Mammary epithelial cell (primary cell): ENCODE measurements at regions of chr6 and their contacts with region 1.

Region 1: DNA sequence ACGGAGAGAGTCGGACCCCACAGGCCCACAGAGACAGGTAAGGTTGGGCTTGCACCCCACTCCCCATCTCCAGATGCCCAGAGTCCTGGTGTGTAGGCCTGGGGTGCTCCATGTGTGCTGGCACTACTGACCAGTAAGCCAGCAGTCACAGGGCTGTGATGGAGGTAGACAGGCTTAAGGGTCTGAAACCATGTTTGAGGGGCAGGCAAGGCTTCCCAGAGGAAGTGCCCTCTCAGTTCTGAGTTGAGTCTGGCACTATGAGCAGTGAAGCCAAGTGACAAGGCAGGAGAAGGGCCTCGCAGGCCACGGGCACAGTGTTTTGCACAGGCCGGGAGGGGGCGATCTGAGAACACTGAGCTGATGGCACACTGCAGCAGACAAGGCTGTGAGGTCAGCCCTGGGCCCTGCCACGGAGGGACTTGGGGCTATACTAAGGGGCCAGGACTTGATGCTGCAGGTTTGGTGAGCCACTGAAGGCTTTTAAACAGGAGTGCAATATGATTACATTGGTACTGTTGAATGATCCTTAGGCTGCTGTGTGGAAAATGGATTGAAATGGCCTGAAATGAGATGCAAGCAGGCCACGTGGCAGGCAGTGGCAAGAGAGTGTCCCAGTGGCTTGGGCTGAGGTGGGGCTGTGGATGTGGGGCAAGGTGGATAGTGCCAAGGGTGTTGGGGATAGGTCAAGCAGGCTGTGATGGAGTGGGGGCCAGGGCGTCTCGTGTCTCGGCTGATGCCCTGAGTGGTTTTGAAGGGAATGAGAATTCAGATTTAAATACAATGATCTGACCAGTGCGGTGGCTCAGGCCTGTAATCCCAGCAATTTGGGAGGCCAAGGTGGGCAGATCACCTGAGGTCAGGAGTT is 20.3 kb downstream of the TTBK1 start:
- DNase-seq: peak; percentile 51
- H3K4me3 ChIP-seq: no peak overlapping the region
- H3K27ac ChIP-seq: no peak overlapping the region
- H3K4me1 ChIP-seq: no peaks in the 10 kb centered on the region
- H3K27me3 ChIP-seq: no peaks in the 10 kb centered on the region
- CTCF ChIP-seq: peak; percentile 87 to 91

Region 2: GRCh38 chr6:43159599-43159998 is 103.9 kb before region 1 on chr6:
- CTCF ChIA-PET with region 1: no interaction called
- dilution Hi-C with region 1: no loop called
- in situ Hi-C with region 1: no loop called
- intact Hi-C with region 1: no loop called
- DNase-seq: no peak
- H3K4me3 ChIP-seq: no peak overlapping the region
- H3K27ac ChIP-seq: no peak overlapping the region
- H3K4me1 ChIP-seq: no peaks in the 10 kb centered on the region
- H3K27me3 ChIP-seq: no peaks in the 10 kb centered on the region
- CTCF ChIP-seq: no peak

Region 3: GRCh38 chr6:43170417-43171283 is 92.9 kb before region 1 on chr6 and contains the start of gene SRF:
- CTCF ChIA-PET with region 1: no interaction called
- dilution Hi-C with region 1: no loop called
- in situ Hi-C with region 1: no loop called
- intact Hi-C with region 1: no loop called
- DNase-seq: peak; percentile 99
- H3K4me3 ChIP-seq: peak within 1 kb of the TSS; percentile 56 to 73 (median 69)
- H3K27ac ChIP-seq: peak within 1 kb of the TSS; percentile 72
- H3K4me1 ChIP-seq: peaks cover 24% of the 10 kb centered on the region
- H3K27me3 ChIP-seq: no peaks in the 10 kb centered on the region
- CTCF ChIP-seq: peak in 1 of 2 donors; percentile 21
- total RNA-seq, gene SRF: 35.7 to 41.2 TPM

Region 4: DNA sequence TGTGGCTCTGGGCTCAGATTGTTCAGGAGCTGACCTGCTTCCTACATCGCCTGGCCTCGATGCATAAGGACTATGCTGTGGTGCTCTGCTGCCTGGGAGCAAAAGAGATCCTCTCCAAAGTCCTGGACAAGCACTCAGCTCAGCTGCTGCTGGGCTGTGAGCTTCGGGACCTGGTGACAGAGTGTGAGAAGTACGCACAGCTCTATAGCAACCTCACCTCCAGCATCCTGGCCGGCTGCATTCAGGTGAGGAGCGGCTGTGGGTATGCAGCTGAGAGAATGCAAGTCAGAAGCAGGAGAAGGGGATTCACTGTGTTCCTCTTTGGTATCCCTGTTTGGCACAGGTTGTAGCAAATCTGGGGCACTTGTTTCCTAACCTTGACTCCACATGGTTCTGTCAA is 63.6 kb before region 1 on chr6:
- CTCF ChIA-PET with region 1: no interaction called
- dilution Hi-C with region 1: loop called (anchors 5 kb)
- in situ Hi-C with region 1: no loop called
- intact Hi-C with region 1: no loop called
- DNase-seq: no peak
- H3K4me3 ChIP-seq: no peak overlapping the region
- H3K27ac ChIP-seq: no peak overlapping the region
- H3K4me1 ChIP-seq: no peaks in the 10 kb centered on the region
- H3K27me3 ChIP-seq: no peaks in the 10 kb centered on the region
- CTCF ChIP-seq: no peak

Region 5: DNA sequence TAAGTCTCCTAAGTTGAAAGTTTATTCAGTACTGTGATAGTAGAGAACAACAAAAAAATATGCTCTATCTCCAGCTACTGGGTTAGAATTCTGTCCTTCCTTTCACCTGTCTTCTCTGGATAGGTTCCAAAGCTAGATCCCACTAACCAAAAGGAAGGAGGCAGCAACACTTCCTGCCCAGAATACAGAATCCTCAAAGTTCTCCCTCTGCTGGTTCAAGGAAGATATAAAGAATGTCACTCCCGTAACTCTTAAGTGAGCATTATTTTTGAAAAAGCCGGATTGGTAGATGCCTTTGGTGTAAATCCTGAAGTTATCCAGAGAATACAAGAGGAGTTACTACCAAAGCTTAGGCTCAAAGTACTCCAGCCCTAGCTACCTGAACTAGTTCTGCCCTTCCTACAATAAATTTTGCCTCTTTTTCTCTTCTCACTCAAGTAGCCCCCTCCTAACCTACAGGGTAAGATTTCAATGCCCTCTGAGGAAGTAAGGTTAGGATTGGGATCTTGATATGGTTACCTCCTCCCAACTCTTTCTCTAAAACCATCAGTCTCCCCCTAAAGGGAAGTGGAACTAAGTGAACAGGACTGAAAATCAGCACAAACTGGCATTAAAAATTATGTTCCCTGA is 71.0 kb after region 1 on chr6:
- CTCF ChIA-PET with region 1: interaction called, 4 read pairs
- dilution Hi-C with region 1: loop called (anchors 5 kb)
- in situ Hi-C with region 1: loop called (anchors 5 to 10 kb)
- intact Hi-C with region 1: loop called (anchors 1 kb)
- DNase-seq: peak; percentile 47
- H3K4me3 ChIP-seq: no peak overlapping the region
- H3K27ac ChIP-seq: no peak overlapping the region
- H3K4me1 ChIP-seq: no peaks in the 10 kb centered on the region
- H3K27me3 ChIP-seq: no peaks in the 10 kb centered on the region
- CTCF ChIP-seq: peak; percentile 58 to 67

Region 6: GRCh38 chr6:43369174-43370022 is 105.9 kb after region 1 on chr6 and contains the start of gene ZNF318:
- CTCF ChIA-PET with region 1: no interaction called
- dilution Hi-C with region 1: no loop called
- in situ Hi-C with region 1: no loop called
- intact Hi-C with region 1: no loop called
- DNase-seq: peak; percentile 98
- H3K4me3 ChIP-seq: peak within 1 kb of the TSS; percentile 55 to 92 (median 76)
- H3K27ac ChIP-seq: peak within 1 kb of the TSS; percentile 83
- H3K4me1 ChIP-seq: peaks cover 32% of the 10 kb centered on the region
- H3K27me3 ChIP-seq: no peaks in the 10 kb centered on the region
- CTCF ChIP-seq: no peak
- total RNA-seq, gene ZNF318: 14.8 to 15.9 TPM

Region 7: GRCh38 chr6:43402820-43403219 is 139.3 kb after region 1 on chr6:
- CTCF ChIA-PET with region 1: no interaction called
- dilution Hi-C with region 1: no loop called
- in situ Hi-C with region 1: no loop called
- intact Hi-C with region 1: loop called (anchors 2 kb)
- DNase-seq: no peak
- H3K4me3 ChIP-seq: no peak overlapping the region
- H3K27ac ChIP-seq: no peak overlapping the region
- H3K4me1 ChIP-seq: peaks cover 7% of the 10 kb centered on the region
- H3K27me3 ChIP-seq: no peaks in the 10 kb centered on the region
- CTCF ChIP-seq: peak; percentile 24 to 27

Region 8: DNA sequence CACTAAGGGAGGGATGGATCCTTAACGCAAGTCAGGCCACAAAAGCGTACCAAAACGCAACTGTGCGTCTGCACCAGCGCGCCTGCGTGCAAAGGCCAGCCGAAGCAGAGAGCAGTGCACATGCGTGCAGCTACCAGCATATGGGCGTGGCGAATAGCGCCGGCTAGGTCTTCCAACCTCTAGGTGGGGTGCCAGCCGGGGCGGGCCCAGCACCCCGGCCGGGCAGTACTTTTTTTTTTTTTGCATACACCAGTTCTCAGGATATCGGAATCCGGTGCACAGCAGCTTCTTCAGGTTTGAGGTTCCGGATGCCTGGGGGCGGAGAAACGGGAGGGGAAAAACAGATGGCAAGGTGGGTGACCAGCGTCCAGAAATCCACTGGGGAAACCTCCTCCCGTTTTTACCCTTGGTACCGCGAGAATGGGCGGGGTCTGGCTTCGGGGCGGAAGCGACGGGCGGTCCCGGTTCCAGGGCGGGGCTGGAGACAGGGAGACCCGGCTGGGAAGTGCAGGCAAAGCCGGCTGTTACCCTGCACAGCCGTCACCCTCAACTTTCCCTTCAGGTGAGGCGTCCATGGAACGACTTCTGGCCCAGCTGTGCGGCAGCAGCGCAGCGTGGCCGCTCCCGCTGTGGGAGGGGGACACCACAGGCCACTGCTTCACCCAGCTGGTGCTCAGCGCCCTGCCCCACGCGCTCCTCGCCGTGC is 164.0 kb after region 1 on chr6 and contains the start of gene ABCC10:
- CTCF ChIA-PET with region 1: no interaction called
- dilution Hi-C with region 1: no loop called
- in situ Hi-C with region 1: no loop called
- intact Hi-C with region 1: loop called (anchors 5 kb)
- DNase-seq: peak; percentile 95
- H3K4me3 ChIP-seq: peak within 1 kb of the TSS; percentile 64 to 100 (median 91)
- H3K27ac ChIP-seq: peak within 1 kb of the TSS; percentile 71
- H3K4me1 ChIP-seq: peaks cover 11% of the 10 kb centered on the region
- H3K27me3 ChIP-seq: no peaks in the 10 kb centered on the region
- CTCF ChIP-seq: peak in 1 of 2 donors; percentile 49
- total RNA-seq, gene ABCC10: 32.0 to 39.9 TPM

Region 9: DNA sequence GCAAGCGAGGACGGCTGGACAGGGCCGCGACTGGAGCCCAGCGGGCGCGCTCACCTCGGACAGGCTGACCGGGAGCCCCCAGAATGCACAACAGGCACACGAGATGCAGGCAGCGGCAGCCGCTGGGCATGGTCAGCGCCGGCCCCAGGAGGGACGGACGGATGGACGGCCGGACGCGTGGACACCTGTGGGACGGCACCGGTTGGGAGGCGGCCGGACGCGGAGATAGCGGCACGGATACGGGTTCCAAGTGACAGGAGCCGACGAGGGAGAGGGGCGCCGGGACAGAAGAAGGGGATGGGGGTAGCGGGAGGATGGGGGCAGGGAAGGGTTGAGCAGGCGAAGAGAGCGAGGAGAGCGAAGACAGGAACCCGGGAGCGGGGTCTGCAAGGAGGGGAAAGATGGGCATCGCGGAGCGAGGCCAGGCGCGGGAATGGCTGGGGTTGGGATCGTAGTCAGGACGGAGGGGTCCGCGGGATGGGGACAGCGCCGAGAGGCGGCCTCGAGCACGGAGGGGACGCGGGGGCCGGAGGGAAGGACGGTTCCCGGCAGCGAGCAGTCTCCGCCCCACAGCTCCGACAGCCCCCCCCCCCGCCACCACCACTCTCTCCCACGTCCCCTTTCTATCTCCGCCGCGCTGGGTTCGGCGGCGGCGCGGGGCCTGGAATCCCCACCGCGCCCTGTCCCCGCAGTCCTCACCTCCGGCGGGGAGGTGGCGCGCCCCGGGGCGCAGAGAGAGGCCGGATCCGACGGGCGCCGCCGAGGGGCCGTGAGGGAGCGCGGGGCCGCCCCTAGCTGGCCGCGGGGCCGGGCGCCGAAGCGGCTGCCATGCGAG is 191.4 kb after region 1 on chr6:
- CTCF ChIA-PET with region 1: no interaction called
- dilution Hi-C with region 1: no loop called
- in situ Hi-C with region 1: no loop called
- intact Hi-C with region 1: loop called (anchors 1 kb)
- DNase-seq: no peak
- H3K4me3 ChIP-seq: peak overlapping the region; percentile 53 to 74 (median 62)
- H3K27ac ChIP-seq: no peak overlapping the region
- H3K4me1 ChIP-seq: peaks cover 13% of the 10 kb centered on the region
- H3K27me3 ChIP-seq: no peaks in the 10 kb centered on the region
- CTCF ChIP-seq: no peak